ENCODE measurements at regions of chr17 and their contacts with region 1.

Region 1: DNA sequence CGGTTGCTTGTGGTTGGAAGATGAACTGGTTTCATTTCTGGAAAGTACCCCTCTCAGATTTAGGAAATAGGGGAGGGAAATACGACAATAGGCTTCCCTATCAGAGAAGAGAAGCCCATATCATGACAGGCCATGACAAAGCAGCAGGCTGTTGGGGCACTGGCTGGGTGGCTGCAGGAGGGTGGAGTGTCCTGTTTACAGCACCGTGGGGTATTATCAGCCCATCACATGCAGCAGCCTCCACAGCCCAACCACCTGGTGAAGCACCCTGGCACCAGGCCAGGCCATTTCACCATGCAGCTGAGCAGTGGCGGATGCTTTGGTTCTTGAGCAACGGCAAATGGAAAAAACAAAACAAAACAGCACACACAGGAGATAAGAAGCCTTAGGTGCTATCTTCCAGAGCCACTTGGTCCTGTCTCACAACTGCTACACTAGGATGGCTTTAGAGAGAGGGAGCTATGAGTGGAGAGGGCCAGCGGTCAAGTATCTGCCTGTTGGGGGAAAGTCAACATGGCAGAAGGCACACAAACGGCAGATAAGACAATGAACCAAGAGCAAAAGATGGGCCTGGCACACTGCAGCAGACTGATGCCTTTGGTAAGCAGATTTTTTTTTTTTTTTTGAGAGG is 24.2 kb downstream of the FAM117A start:
- DNase-seq: peak; percentile 95 to 100 (median 96)
- ATAC-seq: peak; percentile 92
- H3K4me3 ChIP-seq: peak overlapping the region; percentile 16
- H3K27ac ChIP-seq: peak overlapping the region; percentile 92
- H3K4me1 ChIP-seq: peaks cover 28 to 57% of the 10 kb centered on the region in 2 experiments
- H3K27me3 ChIP-seq: no peaks in the 10 kb centered on the region
- CTCF ChIP-seq: no peak; a peak in 1 of 6 replicates
- EP300 ChIP-seq: peak; percentile 99
- POLR2A ChIP-seq: peak; percentile 56; the same call in 1 of the 2 replicates
- RAD21 ChIP-seq: peak; percentile 11 to 55; a peak in 3 of 4 replicates

Region 2: DNA sequence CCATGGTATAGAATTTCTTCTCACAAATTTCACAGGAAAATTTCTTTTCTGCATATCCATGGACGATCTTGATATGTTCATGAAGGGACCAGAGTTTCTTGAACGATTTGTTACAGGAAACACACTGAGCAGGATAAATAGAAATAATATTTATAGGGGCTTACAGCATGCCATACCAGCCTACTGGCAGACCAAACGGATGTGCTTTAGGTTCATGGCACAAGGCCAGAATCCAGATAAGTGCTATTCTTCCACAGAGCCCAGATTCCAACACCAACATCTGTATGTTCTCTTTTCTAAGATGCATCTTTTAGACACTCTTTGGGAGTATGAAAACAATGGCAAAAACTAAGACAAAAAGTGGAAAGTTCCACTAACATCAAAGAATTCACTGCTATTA is 427.0 kb before region 1 on chr17:
- CTCF ChIA-PET with region 1: no interaction called
- POLR2A ChIA-PET with region 1: no interaction called
- in situ Hi-C with region 1: no loop called
- intact Hi-C with region 1: no loop called
- DNase-seq: no peak
- ATAC-seq: no peak
- H3K4me3 ChIP-seq: no peak overlapping the region
- H3K27ac ChIP-seq: no peak overlapping the region
- H3K4me1 ChIP-seq: no peaks in the 10 kb centered on the region; a peak in 3 of 5 replicates
- H3K27me3 ChIP-seq: no peaks in the 10 kb centered on the region
- CTCF ChIP-seq: no peak
- EP300 ChIP-seq: no peak
- POLR2A ChIP-seq: no peak
- RAD21 ChIP-seq: no peak

Region 3: DNA sequence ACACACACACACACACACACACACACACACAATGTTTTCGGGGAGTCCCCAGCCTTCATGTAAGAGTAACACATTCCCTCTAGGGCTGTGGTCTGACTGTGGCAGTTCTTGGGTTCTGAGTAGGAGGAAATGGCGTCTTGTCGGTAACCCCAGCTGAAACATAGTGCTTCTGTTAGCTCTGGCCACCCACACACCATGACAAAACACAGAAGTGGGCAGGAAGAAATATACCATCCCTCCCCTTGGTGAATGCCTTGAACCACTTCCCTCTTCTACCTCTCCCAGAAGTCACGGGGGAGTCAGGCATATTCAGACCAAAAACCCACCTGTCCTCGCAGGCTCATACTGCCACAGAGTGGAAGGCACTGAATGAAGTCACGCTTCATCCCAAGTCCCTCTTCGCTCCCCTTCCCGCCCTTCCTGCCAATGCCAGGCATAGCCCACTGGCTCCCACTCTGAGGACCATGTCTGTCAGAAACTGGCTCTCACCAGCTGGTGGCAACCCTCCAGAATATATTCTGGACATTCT is 43.5 kb before region 1 on chr17:
- CTCF ChIA-PET with region 1: no interaction called
- POLR2A ChIA-PET with region 1: no interaction called
- in situ Hi-C with region 1: no loop called
- intact Hi-C with region 1: no loop called
- DNase-seq: no peak
- ATAC-seq: no peak
- H3K4me3 ChIP-seq: no peak overlapping the region
- H3K27ac ChIP-seq: no peak overlapping the region
- H3K4me1 ChIP-seq: peaks cover 0 to 4% of the 10 kb centered on the region in 2 experiments; a peak in 1 of 5 replicates
- H3K27me3 ChIP-seq: no peaks in the 10 kb centered on the region; a peak in 1 of 5 replicates
- CTCF ChIP-seq: no peak
- EP300 ChIP-seq: no peak
- POLR2A ChIP-seq: no peak
- RAD21 ChIP-seq: no peak

Region 4: GRCh38 chr17:49755663-49756283 is 16.0 kb after region 1 on chr17:
- CTCF ChIA-PET with region 1: no interaction called
- POLR2A ChIA-PET with region 1: interaction called, 18 read pairs
- in situ Hi-C with region 1: no loop called
- intact Hi-C with region 1: no loop called
- DNase-seq: no peak
- ATAC-seq: peak; percentile 15; the same call in 2 of the 3 replicates
- H3K4me3 ChIP-seq: no peak overlapping the region
- H3K27ac ChIP-seq: no peak overlapping the region
- H3K4me1 ChIP-seq: peaks cover 28 to 56% of the 10 kb centered on the region in 2 experiments
- H3K27me3 ChIP-seq: no peaks in the 10 kb centered on the region
- CTCF ChIP-seq: no peak
- EP300 ChIP-seq: no peak
- POLR2A ChIP-seq: no peak
- RAD21 ChIP-seq: no peak

Region 5: GRCh38 chr17:49763735-49764558 is 24.2 kb after region 1 on chr17 and contains the start of gene FAM117A:
- CTCF ChIA-PET with region 1: no interaction called
- POLR2A ChIA-PET with region 1: interaction called, 21 read pairs
- in situ Hi-C with region 1: no loop called
- intact Hi-C with region 1: loop called (anchors 1 kb)
- DNase-seq: peak; percentile 99 to 100 (median 99)
- ATAC-seq: peak; percentile 95
- H3K4me3 ChIP-seq: peak within 1 kb of the TSS; percentile 69
- H3K27ac ChIP-seq: peak within 1 kb of the TSS; percentile 71
- H3K4me1 ChIP-seq: peaks cover 8 to 48% of the 10 kb centered on the region in 2 experiments
- H3K27me3 ChIP-seq: no peaks in the 10 kb centered on the region
- CTCF ChIP-seq: no peak
- EP300 ChIP-seq: no peak
- POLR2A ChIP-seq: peak; percentile 80
- RAD21 ChIP-seq: no peak
- polyA plus RNA-seq, gene FAM117A: 3.1 to 4.7 TPM

Region 6: DNA sequence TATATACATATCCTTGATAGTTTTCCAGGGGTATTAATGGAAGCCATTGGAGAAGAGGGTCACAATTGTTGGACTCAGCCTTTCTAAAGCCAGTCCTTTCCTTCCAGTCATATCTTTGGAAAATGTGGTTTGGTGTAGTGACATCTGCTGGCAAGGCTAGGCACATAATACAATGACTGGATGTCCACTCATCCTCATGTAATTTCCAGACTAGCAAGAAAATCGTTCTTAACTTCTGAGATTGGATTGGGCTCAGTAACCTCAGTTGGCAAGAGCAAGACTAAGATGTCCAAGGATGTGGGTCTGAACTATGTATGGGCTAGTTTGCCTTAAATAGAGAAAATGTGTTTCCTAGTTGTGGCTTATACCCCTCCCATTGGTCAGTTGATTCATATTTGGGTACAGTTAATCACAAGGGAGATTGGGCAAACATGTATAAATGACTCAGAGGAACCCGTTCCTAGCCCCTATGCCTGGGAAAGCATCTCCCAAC is 40.0 kb after region 1 on chr17:
- CTCF ChIA-PET with region 1: no interaction called
- POLR2A ChIA-PET with region 1: interaction called, 3 read pairs
- in situ Hi-C with region 1: no loop called
- intact Hi-C with region 1: loop called (anchors 1 kb)
- DNase-seq: peak; percentile 35 to 78 (median 44)
- ATAC-seq: peak; percentile 95
- H3K4me3 ChIP-seq: no peak overlapping the region
- H3K27ac ChIP-seq: peak overlapping the region; percentile 35; the same call in 2 of the 3 replicates
- H3K4me1 ChIP-seq: peaks cover 5 to 16% of the 10 kb centered on the region in 2 experiments; a peak in 4 of 5 replicates
- H3K27me3 ChIP-seq: no peaks in the 10 kb centered on the region
- CTCF ChIP-seq: peak; percentile 61 to 81 (median 79)
- EP300 ChIP-seq: no peak
- POLR2A ChIP-seq: no peak
- RAD21 ChIP-seq: peak; percentile 80 to 87

Region 7: GRCh38 chr17:49788478-49789242 is 48.9 kb after region 1 on chr17 and contains the start of gene KAT7:
- CTCF ChIA-PET with region 1: interaction called, 5 read pairs
- POLR2A ChIA-PET with region 1: interaction called, 16 read pairs
- in situ Hi-C with region 1: no loop called
- intact Hi-C with region 1: no loop called
- DNase-seq: peak; percentile 98 to 99 (median 98)
- ATAC-seq: peak; percentile 97
- H3K4me3 ChIP-seq: peak within 1 kb of the TSS; percentile 95
- H3K27ac ChIP-seq: peak within 1 kb of the TSS; percentile 100
- H3K4me1 ChIP-seq: peaks cover 10 to 17% of the 10 kb centered on the region in 2 experiments
- H3K27me3 ChIP-seq: no peaks in the 10 kb centered on the region
- CTCF ChIP-seq: no peak
- EP300 ChIP-seq: peak; percentile 37; the same call in 1 of the 2 replicates
- POLR2A ChIP-seq: peak; percentile 99
- RAD21 ChIP-seq: 0 out of 4 replicates have a peak, but pooled peaks of 1 of the 2 experiments have one; percentile 17
- polyA plus RNA-seq, gene KAT7: 10.8 to 10.9 TPM